Aorta (tissue), 5 donors: ENCODE measurements at regions of chr19 and their contacts with region 1.

Region 1: DNA sequence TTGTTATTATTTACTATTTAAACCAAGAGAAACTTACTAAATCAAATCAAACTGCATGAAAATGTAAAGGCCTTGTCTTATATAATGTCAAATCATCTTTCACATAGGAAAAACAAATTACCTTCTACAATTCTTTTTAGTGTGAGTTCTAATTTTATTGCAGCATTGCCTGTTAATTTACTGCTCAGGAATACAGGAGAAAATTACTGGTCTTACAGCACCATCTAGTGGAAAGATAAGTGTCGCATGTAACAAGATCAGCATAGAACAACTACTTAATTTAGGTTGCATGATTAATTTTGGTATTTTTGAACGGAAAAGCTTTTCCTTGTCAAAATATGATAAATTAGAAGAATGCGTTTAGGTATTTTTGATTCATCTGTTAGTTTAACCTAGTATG is 502.7 kb downstream of the UQCRFS1 start:
- DNase-seq: no peak
- ATAC-seq: no peak
- H3K4me3 ChIP-seq: no peak overlapping the region
- H3K27ac ChIP-seq: no peak overlapping the region
- H3K4me1 ChIP-seq: no peaks in the 10 kb centered on the region
- H3K27me3 ChIP-seq: no peaks in the 10 kb centered on the region

Region 2: DNA sequence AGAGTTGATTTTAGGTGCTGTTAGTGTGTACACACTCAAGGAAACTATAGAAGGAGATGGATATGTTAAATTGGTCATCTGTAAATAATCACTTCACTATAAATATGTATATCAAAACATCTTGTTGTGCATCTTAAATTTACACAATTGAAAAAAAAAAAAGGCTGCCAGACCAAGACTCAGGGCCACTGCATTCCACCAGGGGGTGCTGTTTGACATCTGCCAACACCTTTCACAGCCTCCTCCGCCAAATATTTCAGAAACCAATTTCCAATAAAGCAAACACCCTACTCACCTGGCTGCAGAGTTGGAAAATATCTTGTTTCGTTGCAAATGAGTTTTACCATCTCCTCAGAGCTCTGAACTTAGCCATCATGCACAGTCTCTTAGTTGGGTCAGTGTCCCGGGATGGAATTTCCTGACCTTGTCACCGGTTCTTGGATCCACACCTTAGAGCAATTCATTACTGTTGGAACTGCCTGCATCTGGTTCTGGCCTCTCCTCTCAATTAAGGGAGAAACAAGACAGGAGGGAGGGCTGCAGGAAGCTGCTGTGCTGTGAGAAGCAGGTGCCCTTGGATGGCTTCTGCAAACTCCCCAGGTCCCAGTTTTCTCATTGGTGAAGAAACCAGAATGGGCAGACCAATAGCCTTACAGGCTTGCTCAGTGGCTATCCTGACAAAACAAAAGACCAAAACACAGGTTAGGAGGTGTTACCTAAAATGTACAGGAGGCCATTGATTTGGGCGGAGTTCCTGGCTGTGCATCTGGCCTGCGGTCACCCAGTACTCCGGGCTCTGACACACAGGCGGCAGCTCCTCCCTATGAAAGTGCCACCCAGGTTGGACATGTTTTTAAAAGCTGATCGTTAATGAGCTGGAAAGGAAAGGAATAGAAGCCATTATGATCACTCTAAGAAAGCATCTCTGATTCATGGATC is 243.9 kb before region 1 on chr19:
- intact Hi-C with region 1: loop called in 1 of 2 experiments (anchors 5 kb)
- DNase-seq: peak in 1 of 2 donors; percentile 69
- ATAC-seq: no peak
- H3K4me3 ChIP-seq: no peak overlapping the region
- H3K27ac ChIP-seq: no peak overlapping the region
- H3K4me1 ChIP-seq: no peaks in the 10 kb centered on the region
- H3K27me3 ChIP-seq: no peaks in the 10 kb centered on the region

Region 3: DNA sequence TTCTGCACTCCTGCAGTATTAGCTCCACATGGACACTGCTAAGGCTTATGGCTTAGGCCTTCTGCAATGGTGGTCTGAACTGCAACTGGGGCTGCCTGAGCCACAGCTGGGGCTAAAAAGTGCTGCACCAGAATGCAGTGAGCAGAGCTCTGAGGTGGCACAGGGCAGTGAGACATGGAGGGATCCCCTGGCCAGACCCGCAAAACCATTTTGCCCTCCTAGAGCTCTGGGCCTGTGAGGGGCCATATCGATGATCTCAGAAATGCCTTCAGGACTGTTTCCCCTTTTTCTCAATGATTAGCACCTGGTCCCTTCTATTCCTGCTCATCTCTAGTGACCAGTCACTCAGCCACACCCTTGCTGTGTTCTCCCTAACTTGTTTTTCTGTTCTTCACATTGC is 105.0 kb after region 1 on chr19:
- intact Hi-C with region 1: no loop called
- DNase-seq: no peak
- ATAC-seq: no peak
- H3K4me3 ChIP-seq: no peak overlapping the region
- H3K27ac ChIP-seq: no peak overlapping the region
- H3K4me1 ChIP-seq: no peaks in the 10 kb centered on the region
- H3K27me3 ChIP-seq: no peaks in the 10 kb centered on the region